Mammary epithelial cell (primary cell): ENCODE measurements at regions of chr10 and their contacts with region 1.

Region 1: GRCh38 chr10:25725918-25726716 is 207.9 kb upstream of the MYO3A start:
- DNase-seq: peak; percentile 32
- H3K4me3 ChIP-seq: no peak overlapping the region
- H3K27ac ChIP-seq: no peak overlapping the region
- H3K4me1 ChIP-seq: no peaks in the 10 kb centered on the region
- H3K27me3 ChIP-seq: no peaks in the 10 kb centered on the region
- CTCF ChIP-seq: peak; percentile 60 to 78

Region 2: GRCh38 chr10:25689346-25690100 is 36.6 kb before region 1 on chr10:
- CTCF ChIA-PET with region 1: no interaction called
- dilution Hi-C with region 1: loop called (anchors 5 kb)
- in situ Hi-C with region 1: no loop called
- intact Hi-C with region 1: no loop called
- DNase-seq: no peak
- H3K4me3 ChIP-seq: no peak overlapping the region
- H3K27ac ChIP-seq: no peak overlapping the region
- H3K4me1 ChIP-seq: no peaks in the 10 kb centered on the region
- H3K27me3 ChIP-seq: no peaks in the 10 kb centered on the region
- CTCF ChIP-seq: no peak

Region 3: DNA sequence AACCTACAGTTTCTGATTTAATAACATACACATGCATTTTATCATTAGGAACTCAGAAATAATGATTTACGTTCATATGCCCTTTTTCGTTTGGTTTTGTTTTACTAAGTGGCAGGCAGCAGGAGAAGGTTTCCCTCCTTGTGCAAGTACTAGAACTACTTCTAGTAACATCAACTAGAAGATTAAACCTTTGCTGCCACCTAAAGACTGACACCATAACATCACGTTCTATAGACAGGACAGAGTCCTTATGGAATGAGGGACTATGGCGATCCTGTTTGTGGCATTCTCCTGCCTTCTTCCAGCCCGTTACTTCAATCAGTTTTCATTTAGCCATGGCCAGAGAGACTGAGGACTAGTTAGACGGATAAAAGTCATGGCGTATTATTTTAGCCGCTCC is 543.6 kb after region 1 on chr10:
- CTCF ChIA-PET with region 1: no interaction called
- dilution Hi-C with region 1: no loop called
- in situ Hi-C with region 1: no loop called
- intact Hi-C with region 1: loop called (anchors 5 kb)
- DNase-seq: no peak
- H3K4me3 ChIP-seq: no peak overlapping the region
- H3K27ac ChIP-seq: no peak overlapping the region
- H3K4me1 ChIP-seq: no peaks in the 10 kb centered on the region
- H3K27me3 ChIP-seq: no peaks in the 10 kb centered on the region
- CTCF ChIP-seq: no peak

Region 4: GRCh38 chr10:26556748-26557640 is 830.9 kb after region 1 on chr10:
- CTCF ChIA-PET with region 1: no interaction called
- dilution Hi-C with region 1: no loop called
- in situ Hi-C with region 1: loop called in 1 of 2 experiments (anchors 25 kb)
- intact Hi-C with region 1: loop called (anchors 1 kb)
- DNase-seq: peak; percentile 26
- H3K4me3 ChIP-seq: no peak overlapping the region
- H3K27ac ChIP-seq: no peak overlapping the region
- H3K4me1 ChIP-seq: no peaks in the 10 kb centered on the region
- H3K27me3 ChIP-seq: no peaks in the 10 kb centered on the region
- CTCF ChIP-seq: peak; percentile 81 to 94